HepG2 (cell line): ENCODE measurements at regions of chr3 and their contacts with region 1.

Region 1: GRCh38 chr3:33131331-33132018 is 17.7 kb downstream of the CRTAP start:
- DNase-seq: peak; percentile 66
- ATAC-seq: peak; percentile 94
- H3K4me3 ChIP-seq: no peak overlapping the region
- H3K27ac ChIP-seq: no peak overlapping the region
- H3K4me1 ChIP-seq: no peaks in the 10 kb centered on the region
- H3K27me3 ChIP-seq: no peaks in the 10 kb centered on the region
- CTCF ChIP-seq: peak; percentile 84
- EP300 ChIP-seq: no peak
- POLR2A ChIP-seq: no peak
- RAD21 ChIP-seq: peak; percentile 87

Region 2: DNA sequence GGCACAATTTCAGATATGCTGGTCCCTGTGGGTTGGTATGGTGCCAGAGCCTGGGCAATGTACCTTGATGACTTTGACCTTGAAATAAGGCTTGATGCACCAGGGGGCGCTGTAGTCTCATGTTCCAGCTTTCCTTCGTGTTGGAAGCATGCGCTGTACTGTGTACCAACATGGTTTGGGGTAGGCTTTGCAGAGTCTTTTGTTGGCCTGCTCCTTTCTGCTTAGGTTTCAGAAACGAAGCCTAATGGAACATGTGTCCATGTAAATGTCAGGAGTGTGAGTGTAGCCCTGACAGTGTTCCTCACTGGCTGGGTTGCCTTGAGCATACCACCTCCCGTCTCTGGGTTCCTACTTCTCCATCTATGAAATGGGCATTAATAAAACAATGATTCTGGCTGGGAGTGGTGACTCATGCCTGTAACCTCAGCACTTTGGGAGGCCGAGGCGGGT is 183.7 kb before region 1 on chr3:
- CTCF ChIA-PET with region 1: interaction called, 3 read pairs
- POLR2A ChIA-PET with region 1: no interaction called
- in situ Hi-C with region 1: no loop called
- intact Hi-C with region 1: loop called (anchors 1 kb)
- DNase-seq: peak; percentile 83
- ATAC-seq: peak; percentile 92
- H3K4me3 ChIP-seq: no peak overlapping the region
- H3K27ac ChIP-seq: no peak overlapping the region
- H3K4me1 ChIP-seq: peaks cover 14% of the 10 kb centered on the region; the same call in 1 of the 2 replicates
- H3K27me3 ChIP-seq: no peaks in the 10 kb centered on the region
- CTCF ChIP-seq: peak; percentile 97
- EP300 ChIP-seq: no peak
- POLR2A ChIP-seq: no peak
- RAD21 ChIP-seq: peak; percentile 94

Region 3: GRCh38 chr3:33233884-33234283 is 102.4 kb after region 1 on chr3:
- CTCF ChIA-PET with region 1: interaction called, 3 read pairs
- POLR2A ChIA-PET with region 1: no interaction called
- in situ Hi-C with region 1: no loop called
- intact Hi-C with region 1: loop called (anchors 1 kb)
- DNase-seq: no peak
- ATAC-seq: peak; percentile 44; the same call in 1 of the 3 replicates
- H3K4me3 ChIP-seq: no peak overlapping the region
- H3K27ac ChIP-seq: no peak overlapping the region
- H3K4me1 ChIP-seq: peaks cover 8% of the 10 kb centered on the region; the same call in 1 of the 2 replicates
- H3K27me3 ChIP-seq: peaks cover 0 to 7% of the 10 kb centered on the region in 2 experiments; a peak in 2 of 5 replicates
- CTCF ChIP-seq: peak; percentile 55
- EP300 ChIP-seq: no peak
- POLR2A ChIP-seq: no peak
- RAD21 ChIP-seq: no peak

Region 4: GRCh38 chr3:33250712-33251111 is 119.2 kb after region 1 on chr3:
- CTCF ChIA-PET with region 1: interaction called, 16 read pairs
- POLR2A ChIA-PET with region 1: no interaction called
- in situ Hi-C with region 1: no loop called
- intact Hi-C with region 1: loop called (anchors 1 kb)
- DNase-seq: no peak
- ATAC-seq: no peak
- H3K4me3 ChIP-seq: no peak overlapping the region
- H3K27ac ChIP-seq: no peak overlapping the region
- H3K4me1 ChIP-seq: no peaks in the 10 kb centered on the region
- H3K27me3 ChIP-seq: no peaks in the 10 kb centered on the region
- CTCF ChIP-seq: no peak
- EP300 ChIP-seq: no peak
- POLR2A ChIP-seq: no peak
- RAD21 ChIP-seq: no peak

Region 5: GRCh38 chr3:33318709-33319380 is 187.4 kb after region 1 on chr3:
- CTCF ChIA-PET with region 1: interaction called, 5 read pairs
- POLR2A ChIA-PET with region 1: no interaction called
- in situ Hi-C with region 1: no loop called
- intact Hi-C with region 1: loop called (anchors 2 kb)
- DNase-seq: no peak
- ATAC-seq: no peak
- H3K4me3 ChIP-seq: no peak overlapping the region
- H3K27ac ChIP-seq: no peak overlapping the region
- H3K4me1 ChIP-seq: peaks cover 30% of the 10 kb centered on the region
- H3K27me3 ChIP-seq: no peaks in the 10 kb centered on the region
- CTCF ChIP-seq: 0 out of 2 replicates have a peak, but pooled peaks have one; percentile 17
- EP300 ChIP-seq: no peak
- POLR2A ChIP-seq: no peak
- RAD21 ChIP-seq: no peak

Region 6: DNA sequence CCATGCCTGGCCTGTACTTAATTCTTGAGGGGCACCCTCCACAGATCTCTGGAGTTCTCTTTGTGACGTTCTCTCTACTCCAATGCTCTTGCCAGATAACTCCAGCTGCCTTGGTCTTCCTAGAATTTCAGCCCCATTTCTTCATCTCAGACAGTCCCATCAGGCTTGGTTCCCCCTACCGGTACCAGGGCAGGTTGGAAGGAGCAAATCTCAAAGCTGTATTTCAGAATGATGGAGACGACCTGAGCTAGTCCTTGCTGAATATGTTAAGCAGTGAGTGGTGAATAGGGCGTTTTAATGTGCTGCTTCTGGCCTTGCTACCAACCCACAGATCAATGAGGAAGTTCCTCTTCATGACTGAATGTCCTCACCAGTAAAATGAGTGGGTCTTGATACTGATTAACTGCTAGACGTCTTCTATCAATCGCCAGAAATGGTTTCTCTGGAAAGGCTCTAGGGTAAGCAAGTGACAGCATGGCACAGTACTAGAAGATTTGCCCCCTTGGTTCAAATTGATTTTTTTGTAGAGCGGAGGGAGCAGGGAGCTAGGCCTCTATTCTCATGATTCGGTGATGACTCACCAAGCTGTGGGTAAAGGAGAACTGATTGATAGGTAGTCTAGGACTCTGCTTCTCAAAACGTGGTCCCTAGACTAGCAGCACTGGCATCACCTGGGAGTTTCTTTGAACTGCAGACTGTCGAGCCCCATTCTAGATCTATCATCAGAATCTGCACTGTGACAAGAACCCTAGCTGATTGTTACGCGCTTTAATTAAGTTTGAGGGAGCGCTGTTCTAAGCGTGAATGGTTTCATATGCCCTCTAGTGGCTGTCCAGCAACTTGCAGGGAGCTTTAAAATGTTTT is 241.0 kb after region 1 on chr3:
- CTCF ChIA-PET with region 1: interaction called, 40 read pairs
- POLR2A ChIA-PET with region 1: interaction called, 5 read pairs
- in situ Hi-C with region 1: loop called (anchors 5 kb)
- intact Hi-C with region 1: loop called (anchors 1 kb)
- DNase-seq: no peak
- ATAC-seq: peak; percentile 58
- H3K4me3 ChIP-seq: no peak overlapping the region
- H3K27ac ChIP-seq: no peak overlapping the region
- H3K4me1 ChIP-seq: peaks cover 4% of the 10 kb centered on the region
- H3K27me3 ChIP-seq: no peaks in the 10 kb centered on the region
- CTCF ChIP-seq: peak; percentile 85
- EP300 ChIP-seq: no peak
- POLR2A ChIP-seq: no peak
- RAD21 ChIP-seq: peak; percentile 79

Region 7: GRCh38 chr3:33787328-33788009 is 656.0 kb after region 1 on chr3:
- CTCF ChIA-PET with region 1: no interaction called
- POLR2A ChIA-PET with region 1: no interaction called
- in situ Hi-C with region 1: no loop called
- intact Hi-C with region 1: loop called (anchors 10 kb)
- DNase-seq: peak; percentile 65
- ATAC-seq: peak; percentile 95
- H3K4me3 ChIP-seq: peak overlapping the region; percentile 61 to 73 (median 61)
- H3K27ac ChIP-seq: no peak overlapping the region
- H3K4me1 ChIP-seq: peaks cover 18% of the 10 kb centered on the region
- H3K27me3 ChIP-seq: no peaks in the 10 kb centered on the region
- CTCF ChIP-seq: peak; percentile 89
- EP300 ChIP-seq: no peak
- POLR2A ChIP-seq: no peak
- RAD21 ChIP-seq: peak; percentile 64